Heart left ventricle (tissue), 16 donors: ENCODE measurements at regions of chr13 and their contacts with region 1.

Region 1: DNA sequence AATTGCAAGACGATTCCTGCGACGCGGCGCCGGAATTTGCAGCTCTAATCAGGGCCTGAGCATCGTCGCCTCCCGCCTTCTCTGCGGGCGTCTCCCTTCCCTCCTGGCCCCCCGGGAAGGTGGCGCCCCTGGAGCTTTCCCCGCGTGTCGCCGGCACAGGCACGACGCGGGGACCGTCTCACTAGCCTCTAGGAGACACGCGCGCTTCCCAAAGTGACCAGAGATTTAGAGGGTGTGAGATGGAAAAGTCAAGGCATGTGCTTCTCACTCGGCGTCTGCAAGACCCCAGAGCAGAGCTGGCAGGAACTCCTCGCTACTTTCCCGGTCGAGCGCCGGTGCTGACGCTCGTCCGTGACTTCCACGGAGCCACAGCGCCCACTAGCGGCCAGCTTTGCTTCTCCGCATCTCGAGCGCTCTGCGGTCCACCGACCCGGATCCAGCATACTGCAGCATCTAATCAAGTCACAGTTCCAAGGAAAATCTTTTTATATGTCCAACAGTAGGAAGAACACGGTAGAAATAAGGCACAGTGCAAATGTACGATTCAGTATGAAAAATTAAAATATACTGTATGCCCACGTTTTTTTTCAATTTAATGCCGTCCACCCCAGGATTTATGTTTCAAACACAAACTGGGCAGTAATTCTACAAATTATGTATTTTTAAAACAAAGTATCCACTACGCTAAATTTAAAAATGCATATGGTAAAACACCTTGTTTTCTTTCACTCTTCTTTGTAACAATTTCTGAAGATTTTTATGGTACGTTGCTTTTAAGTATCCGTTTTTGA is 977 bp upstream of the EFNB2 start:
- DNase-seq: peak; percentile 90 to 96 (median 91)
- ATAC-seq: peak; percentile 70 to 86 (median 82)
- H3K4me3 ChIP-seq: peak overlapping the region; percentile 59 to 83 (median 74)
- H3K27ac ChIP-seq: peak overlapping the region; percentile 51 to 89 (median 74)
- H3K4me1 ChIP-seq: peaks cover 0 to 41% (median 13%) of the 10 kb centered on the region in 12 donors
- H3K27me3 ChIP-seq: peaks cover 0 to 29% (median 0%) of the 10 kb centered on the region in 9 donors
- CTCF ChIP-seq: peak; percentile 87 to 99 (median 97)
- POLR2A ChIP-seq: no peak

Region 2: DNA sequence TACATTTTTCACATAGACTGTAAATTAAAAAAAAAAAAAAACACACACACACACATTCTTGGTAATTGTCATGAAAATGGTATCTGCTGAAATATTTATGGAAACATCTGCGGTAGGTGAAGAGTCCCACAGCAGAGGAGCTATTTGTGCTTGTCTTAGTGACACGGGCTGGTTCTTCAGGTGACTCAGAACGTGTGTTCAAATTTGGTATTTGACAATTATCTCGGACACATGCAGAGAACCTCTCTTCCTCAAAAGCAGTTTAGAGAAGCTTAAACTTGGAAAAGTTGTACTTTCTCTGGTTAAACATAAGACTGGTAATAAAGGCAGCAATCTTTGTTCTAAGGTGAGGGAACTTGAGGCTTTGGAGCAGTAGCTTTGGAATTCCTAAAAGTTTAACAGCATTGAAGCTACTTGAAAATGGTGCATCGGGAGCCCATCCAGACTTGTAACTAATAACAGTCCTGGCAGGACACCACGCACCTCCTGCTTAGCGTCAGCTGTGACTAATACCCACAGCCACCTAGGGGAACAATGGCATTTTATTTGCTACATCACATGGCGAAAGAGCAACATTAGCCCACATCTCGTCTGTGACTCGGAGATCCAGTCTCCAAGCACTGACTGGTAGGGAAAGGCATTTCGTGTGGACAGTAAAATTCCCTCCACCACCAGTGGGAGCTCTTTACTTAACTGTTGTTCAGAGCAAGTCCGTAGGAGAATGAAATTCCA is 1965.1 kb before region 1 on chr13:
- intact Hi-C with region 1: loop called in 8 of 10 experiments (anchors 5 to 10 kb)
- DNase-seq: peak in 4 of 5 donors; percentile 44 to 62 (median 59)
- ATAC-seq: peak; percentile 64 to 87 (median 82)
- H3K4me3 ChIP-seq: peak overlapping the region in 1 of 12 donors; percentile 2
- H3K27ac ChIP-seq: no peak overlapping the region
- H3K4me1 ChIP-seq: peaks cover 0 to 9% (median 0%) of the 10 kb centered on the region in 12 donors
- H3K27me3 ChIP-seq: peaks cover 0 to 5% (median 0%) of the 10 kb centered on the region in 9 donors
- CTCF ChIP-seq: peak; percentile 38 to 79 (median 64)
- POLR2A ChIP-seq: no peak

Region 3: GRCh38 chr13:105410602-105411001 is 1125.8 kb before region 1 on chr13:
- intact Hi-C with region 1: loop called in 3 of 10 experiments (anchors 5 to 10 kb)
- DNase-seq: peak in 4 of 5 donors; percentile 29 to 64 (median 42)
- ATAC-seq: no peak
- H3K4me3 ChIP-seq: peak overlapping the region in 2 of 12 donors; percentile 8 to 20
- H3K27ac ChIP-seq: no peak overlapping the region
- H3K4me1 ChIP-seq: no peaks in the 10 kb centered on the region
- H3K27me3 ChIP-seq: no peaks in the 10 kb centered on the region
- CTCF ChIP-seq: peak; percentile 34 to 74 (median 53)
- POLR2A ChIP-seq: no peak

Region 4: DNA sequence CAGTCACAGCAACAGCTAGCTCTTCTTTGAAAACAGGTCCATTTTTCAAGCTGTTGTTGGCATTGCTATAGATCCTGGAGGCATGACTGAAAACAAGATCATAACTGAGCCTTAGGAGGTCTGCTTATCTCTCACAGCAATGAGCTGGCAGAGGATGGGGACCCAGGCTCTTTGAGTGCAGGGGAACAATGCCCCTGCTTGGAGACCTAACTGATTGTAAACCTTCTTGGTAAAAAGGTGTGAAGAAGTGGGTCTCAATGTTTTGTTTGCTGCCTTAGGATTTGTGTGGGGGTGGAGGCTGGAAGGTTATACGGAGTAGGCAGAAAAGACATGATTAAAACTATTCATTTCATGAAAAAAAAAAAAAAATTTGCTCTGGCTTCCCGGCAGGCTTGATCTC is 95.6 kb before region 1 on chr13:
- intact Hi-C with region 1: no loop called
- DNase-seq: no peak
- ATAC-seq: no peak
- H3K4me3 ChIP-seq: no peak overlapping the region
- H3K27ac ChIP-seq: no peak overlapping the region
- H3K4me1 ChIP-seq: no peaks in the 10 kb centered on the region
- H3K27me3 ChIP-seq: no peaks in the 10 kb centered on the region
- CTCF ChIP-seq: no peak
- POLR2A ChIP-seq: no peak

Region 5: DNA sequence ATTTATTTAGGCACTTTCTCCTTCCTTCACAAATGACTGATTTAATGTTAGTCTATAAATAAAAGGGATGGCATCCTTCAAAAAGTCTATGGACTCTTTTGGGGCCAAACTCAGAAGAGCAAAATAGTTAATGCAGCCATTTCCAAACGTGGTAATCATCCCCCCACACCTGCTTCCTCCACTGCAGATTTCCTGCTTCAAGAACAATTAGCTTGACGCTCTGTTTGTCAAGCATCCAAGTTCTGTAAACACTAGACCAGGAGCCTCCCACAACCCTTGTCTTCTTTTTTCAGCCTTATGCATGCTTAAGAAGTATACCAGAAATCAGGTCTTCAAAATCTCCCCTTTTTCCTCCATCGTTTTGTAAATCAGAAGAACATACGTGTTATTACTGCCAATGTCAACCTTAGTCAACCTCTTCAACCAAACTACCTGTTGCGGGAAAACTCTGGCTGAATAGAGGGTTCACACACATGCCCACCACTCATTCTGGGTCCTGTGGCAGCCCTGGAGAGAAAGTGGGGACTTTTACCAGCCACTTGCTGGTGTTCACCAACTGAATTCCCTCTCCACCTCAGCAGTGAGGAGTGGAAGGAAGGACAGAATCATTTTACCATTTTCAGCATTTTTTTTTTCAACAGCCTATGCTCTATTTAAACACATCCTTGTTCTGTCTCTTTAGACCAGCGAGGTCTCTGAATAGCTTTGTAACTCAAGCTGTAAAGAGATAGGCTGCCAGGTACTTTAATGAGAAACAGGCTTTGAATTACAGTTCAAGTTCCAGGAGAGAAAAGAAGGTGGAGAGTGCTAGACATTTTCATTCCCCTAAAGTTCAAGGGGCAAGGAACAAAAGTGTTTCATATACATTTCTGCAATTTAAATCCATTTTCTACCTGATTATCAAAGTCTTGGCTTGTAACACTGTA is 40.1 kb before region 1 on chr13:
- intact Hi-C with region 1: loop called in 1 of 10 experiments (anchors 2 kb)
- DNase-seq: peak in 2 of 5 donors; percentile 59 to 75
- ATAC-seq: peak; percentile 73 to 92 (median 78)
- H3K4me3 ChIP-seq: peak overlapping the region in 1 of 12 donors; percentile 14
- H3K27ac ChIP-seq: peak overlapping the region; percentile 25 to 80 (median 68)
- H3K4me1 ChIP-seq: peaks cover 0 to 88% (median 43%) of the 10 kb centered on the region in 12 donors
- H3K27me3 ChIP-seq: no peaks in the 10 kb centered on the region
- CTCF ChIP-seq: no peak
- POLR2A ChIP-seq: no peak

Region 6: GRCh38 chr13:106709522-106709921 is 173.1 kb after region 1 on chr13:
- intact Hi-C with region 1: loop called in 1 of 10 experiments (anchors 10 kb)
- DNase-seq: peak in 2 of 5 donors; percentile 26 to 41
- ATAC-seq: peak; percentile 32 to 93 (median 86)
- H3K4me3 ChIP-seq: peak overlapping the region in 10 of 12 donors; percentile 1 to 51 (median 36)
- H3K27ac ChIP-seq: peak overlapping the region; percentile 65 to 88 (median 82)
- H3K4me1 ChIP-seq: peaks cover 0 to 51% (median 8%) of the 10 kb centered on the region in 12 donors
- H3K27me3 ChIP-seq: no peaks in the 10 kb centered on the region
- CTCF ChIP-seq: no peak
- POLR2A ChIP-seq: no peak

Region 7: GRCh38 chr13:106819413-106820155 is 283.1 kb after region 1 on chr13:
- intact Hi-C with region 1: no loop called
- DNase-seq: no peak
- ATAC-seq: peak in 1 of 4 donors; percentile 44
- H3K4me3 ChIP-seq: no peak overlapping the region
- H3K27ac ChIP-seq: no peak overlapping the region
- H3K4me1 ChIP-seq: peaks cover 0 to 4% (median 0%) of the 10 kb centered on the region in 12 donors
- H3K27me3 ChIP-seq: no peaks in the 10 kb centered on the region
- CTCF ChIP-seq: no peak
- POLR2A ChIP-seq: no peak

Region 8: DNA sequence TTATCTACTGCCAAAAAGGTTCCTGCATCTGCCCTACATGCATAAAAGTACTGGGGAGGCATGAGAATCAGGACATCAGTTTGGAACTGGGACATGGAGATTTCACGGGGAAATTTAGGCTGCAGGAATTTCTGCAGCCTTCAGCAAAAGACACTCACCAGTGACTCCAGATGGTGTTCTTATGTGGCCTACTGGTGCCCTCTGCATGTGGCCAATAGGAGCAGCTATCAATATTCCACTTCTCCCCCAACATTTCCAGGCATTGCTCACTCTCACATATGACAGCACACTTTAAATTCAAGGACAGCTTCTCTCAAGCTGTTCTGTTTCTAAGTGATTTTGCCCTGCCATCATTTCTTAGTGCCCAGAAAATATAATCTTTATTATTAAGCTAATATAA is 602.0 kb after region 1 on chr13:
- intact Hi-C with region 1: loop called in 1 of 10 experiments (anchors 10 kb)
- DNase-seq: no peak
- ATAC-seq: no peak
- H3K4me3 ChIP-seq: no peak overlapping the region
- H3K27ac ChIP-seq: peak overlapping the region in 6 of 12 donors; percentile 9 to 44 (median 30)
- H3K4me1 ChIP-seq: peaks cover 0 to 35% (median 13%) of the 10 kb centered on the region in 12 donors
- H3K27me3 ChIP-seq: no peaks in the 10 kb centered on the region
- CTCF ChIP-seq: no peak
- POLR2A ChIP-seq: no peak